ENCODE measurements at regions of chr9 and their contacts with region 1.

Region 1: DNA sequence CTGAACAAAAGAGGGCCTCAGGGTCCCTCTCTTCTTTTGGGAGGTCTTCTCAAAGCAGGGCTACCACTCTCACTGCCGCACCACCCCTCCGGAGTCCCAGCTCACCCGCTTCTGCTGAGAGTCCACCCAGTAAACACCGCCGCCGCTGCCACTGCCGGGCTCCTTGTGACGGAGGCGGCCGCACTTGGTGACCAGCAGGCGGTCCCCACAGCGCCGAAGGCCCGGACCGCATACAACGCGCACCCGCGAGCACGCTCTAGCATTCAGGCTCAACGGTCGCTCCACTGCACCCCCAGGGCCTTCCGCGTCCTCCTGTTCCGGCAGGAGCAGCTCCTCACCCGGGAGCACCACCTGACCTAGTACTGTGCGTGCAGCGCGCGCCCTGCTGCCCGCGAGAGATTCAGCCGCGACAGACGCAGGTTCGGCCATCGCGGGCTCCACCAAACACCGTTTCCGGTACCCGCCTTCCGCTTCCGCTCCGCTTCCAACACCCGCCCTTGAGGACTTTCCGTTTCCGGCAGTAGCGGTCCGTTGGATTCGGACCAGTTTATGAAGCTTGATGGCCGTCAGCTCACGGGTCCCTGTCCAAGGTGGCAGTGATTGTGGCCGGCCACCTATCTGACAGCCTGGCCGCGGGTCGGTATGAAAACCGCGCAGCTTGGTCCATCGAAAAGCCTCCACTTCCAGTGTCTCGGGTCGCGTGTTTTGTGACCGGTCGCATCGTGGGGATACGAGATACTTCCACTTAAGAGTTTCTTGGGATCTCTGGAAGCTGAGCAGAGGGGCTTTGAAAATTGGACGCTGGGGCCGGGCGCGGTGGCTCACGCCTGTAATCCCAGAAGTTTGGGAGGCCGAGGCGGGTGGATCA is at the start of gene EXOSC3:
- DNase-seq: peak; percentile 97
- H3K4me3 Mint-ChIP-seq: peak within 1 kb of the TSS; percentile 98
- H3K27ac Mint-ChIP-seq: peak within 1 kb of the TSS; percentile 97
- H3K4me1 Mint-ChIP-seq: peaks cover 19% of the 10 kb centered on the region
- H3K27me3 Mint-ChIP-seq: no peaks in the 10 kb centered on the region
- total RNA-seq, gene EXOSC3: 104 and 109 TPM in 2 replicates

Region 2: GRCh38 chr9:37485389-37486219 is 299.2 kb before region 1 on chr9 and contains the start of gene POLR1E:
- intact Hi-C with region 1: loop called (anchors 10 kb)
- DNase-seq: peak; percentile 99
- H3K4me3 Mint-ChIP-seq: peak within 1 kb of the TSS; percentile 91
- H3K27ac Mint-ChIP-seq: peak within 1 kb of the TSS; percentile 94
- H3K4me1 Mint-ChIP-seq: peaks cover 33% of the 10 kb centered on the region
- H3K27me3 Mint-ChIP-seq: peaks cover 9% of the 10 kb centered on the region
- total RNA-seq, gene POLR1E: 60.0 and 64.0 TPM in 2 replicates

Region 3: GRCh38 chr9:37719526-37719925 is 65.3 kb before region 1 on chr9:
- intact Hi-C with region 1: no loop called
- DNase-seq: no peak
- H3K4me3 Mint-ChIP-seq: no peak overlapping the region
- H3K27ac Mint-ChIP-seq: no peak overlapping the region
- H3K4me1 Mint-ChIP-seq: no peaks in the 10 kb centered on the region
- H3K27me3 Mint-ChIP-seq: peaks cover 7% of the 10 kb centered on the region

Region 4: DNA sequence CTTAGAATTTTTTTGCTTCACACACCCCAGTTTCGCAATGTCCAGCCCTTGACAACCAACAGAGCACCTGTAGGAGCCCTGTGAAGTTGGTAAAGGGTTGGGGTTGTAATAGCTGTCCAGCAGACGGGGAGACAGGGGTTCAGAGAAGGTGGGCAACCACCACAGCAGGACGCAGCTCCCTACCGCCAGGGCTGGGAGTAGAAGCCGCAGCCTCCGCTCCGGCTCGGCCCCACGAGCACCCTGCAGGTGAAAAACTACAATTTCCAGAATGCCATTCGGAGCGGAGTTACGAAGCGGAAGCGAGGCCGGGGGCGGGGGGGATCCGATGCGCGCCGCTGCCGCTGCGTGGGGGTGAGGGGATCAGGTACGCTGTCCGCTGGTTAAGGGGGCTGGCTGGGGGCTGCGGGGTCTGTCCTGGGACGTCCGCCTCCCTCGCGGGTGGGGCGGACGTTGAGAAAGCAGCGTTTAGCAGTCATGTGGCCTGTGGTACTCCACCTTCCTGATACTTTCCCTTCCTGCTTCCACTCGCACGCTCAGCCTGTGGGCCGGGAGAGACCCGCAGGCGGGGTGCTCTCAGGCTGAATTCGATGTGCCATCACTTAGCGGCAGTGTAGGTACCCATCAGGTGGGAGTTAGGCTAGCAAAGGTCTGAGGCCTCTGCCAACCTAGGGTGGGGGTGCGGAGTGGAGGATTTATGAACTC is 31.2 kb before region 1 on chr9 and contains the start of gene TRMT10B:
- intact Hi-C with region 1: loop called (anchors 1 kb)
- DNase-seq: peak; percentile 92
- H3K4me3 Mint-ChIP-seq: peak within 1 kb of the TSS; percentile 99
- H3K27ac Mint-ChIP-seq: peak within 1 kb of the TSS; percentile 97
- H3K4me1 Mint-ChIP-seq: peaks cover 22% of the 10 kb centered on the region
- H3K27me3 Mint-ChIP-seq: no peaks in the 10 kb centered on the region
- total RNA-seq, gene TRMT10B: 12.4 and 13.2 TPM in 2 replicates

Region 5: GRCh38 chr9:37800631-37801286 is 15.9 kb after region 1 on chr9 and contains the start of gene DCAF10:
- intact Hi-C with region 1: loop called (anchors 1 kb)
- DNase-seq: peak; percentile 98
- H3K4me3 Mint-ChIP-seq: peak within 1 kb of the TSS; percentile 94
- H3K27ac Mint-ChIP-seq: peak within 1 kb of the TSS; percentile 88
- H3K4me1 Mint-ChIP-seq: peaks cover 29% of the 10 kb centered on the region
- H3K27me3 Mint-ChIP-seq: no peaks in the 10 kb centered on the region
- total RNA-seq, gene DCAF10: 14.5 and 17.8 TPM in 2 replicates

Region 6: DNA sequence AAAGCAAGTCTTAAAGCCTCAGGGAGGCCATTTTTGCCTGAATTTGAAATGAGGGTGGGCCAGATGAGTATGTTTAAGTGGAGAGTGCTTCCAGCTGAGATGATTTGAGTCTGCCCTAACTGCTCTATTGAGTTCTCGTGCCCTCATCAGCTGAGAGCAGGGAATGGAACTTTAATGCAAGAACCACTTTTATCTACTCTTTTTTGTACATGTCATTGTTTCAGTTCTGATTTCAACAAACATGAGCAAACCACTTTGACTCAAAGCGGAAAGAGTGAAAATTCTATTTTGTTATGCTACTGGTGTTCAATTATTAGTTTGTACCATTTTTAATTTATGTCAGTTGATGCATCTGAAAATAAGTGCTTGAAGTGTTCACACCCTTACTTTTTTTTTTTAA is 51.5 kb after region 1 on chr9:
- intact Hi-C with region 1: loop called (anchors 2 kb)
- DNase-seq: no peak
- H3K4me3 Mint-ChIP-seq: no peak overlapping the region
- H3K27ac Mint-ChIP-seq: peak overlapping the region; percentile 54
- H3K4me1 Mint-ChIP-seq: peaks cover 14% of the 10 kb centered on the region
- H3K27me3 Mint-ChIP-seq: no peaks in the 10 kb centered on the region